Mammary epithelial cell (primary cell): ENCODE measurements at regions of chr3 and their contacts with region 1.

Region 1: GRCh38 chr3:106609666-106610301 is 741.0 kb upstream of the CBLB start:
- DNase-seq: peak; percentile 62
- H3K4me3 ChIP-seq: no peak overlapping the region
- H3K27ac ChIP-seq: no peak overlapping the region
- H3K4me1 ChIP-seq: peaks cover 10% of the 10 kb centered on the region
- H3K27me3 ChIP-seq: no peaks in the 10 kb centered on the region
- CTCF ChIP-seq: peak; percentile 90 to 92

Region 2: DNA sequence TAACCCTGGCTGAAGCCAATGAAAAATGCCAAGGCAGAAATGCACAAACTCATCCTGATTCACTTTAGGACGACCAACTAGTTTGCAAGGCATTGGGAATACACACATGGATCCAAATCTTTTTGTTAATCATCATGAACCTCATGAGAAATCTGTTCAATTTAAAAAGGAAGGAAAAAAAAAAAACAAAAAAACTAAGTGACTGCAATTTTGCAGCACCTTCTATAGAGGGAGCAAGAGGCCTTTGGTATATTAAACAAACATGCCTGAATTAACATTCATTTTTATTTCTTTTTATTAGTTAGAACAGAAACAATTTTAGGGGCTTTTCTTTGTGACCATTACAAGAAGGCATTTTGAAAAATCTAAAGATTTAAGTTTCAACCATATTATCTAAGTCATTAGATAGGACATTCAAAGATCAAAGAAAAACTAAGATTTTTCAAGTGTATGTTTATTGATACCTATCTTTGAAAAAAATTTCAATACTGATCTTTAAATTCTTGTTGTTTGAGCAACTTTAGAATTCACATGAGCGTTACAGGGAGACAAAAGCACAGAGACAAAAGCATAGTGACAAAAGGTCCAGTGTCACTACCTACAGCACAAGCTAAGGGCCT is 923.4 kb before region 1 on chr3:
- CTCF ChIA-PET with region 1: no interaction called
- dilution Hi-C with region 1: no loop called
- in situ Hi-C with region 1: loop called (anchors 25 kb)
- intact Hi-C with region 1: loop called (anchors 1 kb)
- DNase-seq: no peak
- H3K4me3 ChIP-seq: no peak overlapping the region
- H3K27ac ChIP-seq: no peak overlapping the region
- H3K4me1 ChIP-seq: no peaks in the 10 kb centered on the region
- H3K27me3 ChIP-seq: no peaks in the 10 kb centered on the region
- CTCF ChIP-seq: peak; percentile 76 to 82

Region 3: GRCh38 chr3:106212665-106213222 is 397.0 kb before region 1 on chr3:
- CTCF ChIA-PET with region 1: no interaction called
- dilution Hi-C with region 1: no loop called
- in situ Hi-C with region 1: no loop called
- intact Hi-C with region 1: loop called (anchors 5 kb)
- DNase-seq: peak; percentile 26
- H3K4me3 ChIP-seq: no peak overlapping the region
- H3K27ac ChIP-seq: no peak overlapping the region
- H3K4me1 ChIP-seq: no peaks in the 10 kb centered on the region
- H3K27me3 ChIP-seq: no peaks in the 10 kb centered on the region
- CTCF ChIP-seq: no peak

Region 4: DNA sequence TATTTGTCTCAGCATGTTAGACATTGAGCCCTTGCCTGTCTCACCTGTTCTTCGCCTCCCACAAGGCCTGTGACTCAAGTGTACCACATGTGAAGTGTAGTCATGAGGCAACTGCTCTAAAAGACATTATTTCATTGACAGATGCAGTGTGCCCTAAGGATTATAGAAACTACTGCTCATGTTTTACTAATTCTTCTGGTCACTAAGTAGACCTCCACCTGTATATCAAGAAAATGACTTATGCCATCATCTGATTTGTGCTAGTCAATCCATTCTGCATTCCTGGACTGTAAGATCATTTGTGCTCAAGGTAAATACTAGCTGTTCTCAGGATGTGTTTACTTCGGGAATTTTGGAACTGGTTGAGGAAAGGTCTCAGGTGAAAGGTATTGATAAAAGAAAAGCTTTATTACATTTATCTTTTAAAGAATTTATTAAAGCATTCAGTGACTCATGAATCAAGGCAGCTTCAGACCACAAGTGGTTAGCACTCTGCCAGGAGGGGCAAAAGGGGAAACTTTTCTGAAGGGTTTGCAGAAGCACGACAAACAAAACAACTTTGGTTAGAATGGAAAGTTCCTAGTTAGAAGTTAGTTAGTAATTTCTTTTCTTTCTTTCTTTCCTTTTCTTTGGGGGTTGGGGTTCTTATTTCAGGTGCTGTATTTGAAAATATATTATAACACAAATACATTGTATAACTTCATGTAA is 275.7 kb before region 1 on chr3:
- CTCF ChIA-PET with region 1: no interaction called
- dilution Hi-C with region 1: no loop called
- in situ Hi-C with region 1: no loop called
- intact Hi-C with region 1: loop called (anchors 5 kb)
- DNase-seq: peak; percentile 94
- H3K4me3 ChIP-seq: no peak overlapping the region
- H3K27ac ChIP-seq: peak overlapping the region; percentile 29
- H3K4me1 ChIP-seq: peaks cover 14% of the 10 kb centered on the region
- H3K27me3 ChIP-seq: no peaks in the 10 kb centered on the region
- CTCF ChIP-seq: no peak

Region 5: GRCh38 chr3:106589311-106589942 is 20.4 kb before region 1 on chr3:
- CTCF ChIA-PET with region 1: no interaction called
- dilution Hi-C with region 1: no loop called
- in situ Hi-C with region 1: no loop called
- intact Hi-C with region 1: no loop called
- DNase-seq: peak; percentile 95
- H3K4me3 ChIP-seq: no peak overlapping the region
- H3K27ac ChIP-seq: peak overlapping the region; percentile 57
- H3K4me1 ChIP-seq: peaks cover 24% of the 10 kb centered on the region
- H3K27me3 ChIP-seq: no peaks in the 10 kb centered on the region
- CTCF ChIP-seq: no peak

Region 6: DNA sequence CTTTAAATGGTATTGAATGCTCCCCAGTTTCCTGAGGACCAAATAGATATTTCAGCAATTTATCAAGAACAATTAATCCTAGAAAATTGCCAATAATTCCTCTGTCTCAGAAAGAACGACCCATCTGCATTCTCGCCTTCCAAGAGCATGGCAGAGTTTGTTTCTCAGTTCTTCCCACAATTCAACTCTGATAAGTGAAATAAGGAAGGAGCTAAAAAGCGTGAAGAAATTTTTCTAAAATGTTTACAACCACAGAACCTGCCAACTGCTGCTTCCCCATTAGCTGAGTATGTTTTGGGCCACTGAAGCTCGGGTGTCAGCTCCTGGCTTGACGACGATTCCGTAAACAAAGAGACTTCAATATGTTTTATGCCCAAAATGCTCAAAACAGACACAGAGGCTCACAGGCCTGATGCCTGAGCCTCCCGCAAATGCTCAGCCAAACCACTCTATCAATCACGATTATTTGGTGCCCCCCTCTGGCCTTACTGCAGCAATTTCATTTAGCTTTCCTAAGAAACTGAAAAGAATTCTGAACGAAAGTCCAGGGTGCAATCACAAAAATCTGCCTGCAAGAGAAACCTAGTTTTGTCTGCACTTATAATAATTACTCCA is 508.2 kb after region 1 on chr3:
- CTCF ChIA-PET with region 1: no interaction called
- dilution Hi-C with region 1: no loop called
- in situ Hi-C with region 1: no loop called
- intact Hi-C with region 1: loop called (anchors 1 kb)
- DNase-seq: peak; percentile 41
- H3K4me3 ChIP-seq: no peak overlapping the region
- H3K27ac ChIP-seq: no peak overlapping the region
- H3K4me1 ChIP-seq: no peaks in the 10 kb centered on the region
- H3K27me3 ChIP-seq: no peaks in the 10 kb centered on the region
- CTCF ChIP-seq: peak; percentile 56